Esophagus muscularis mucosa (tissue), 4 donors: ENCODE measurements at regions of chr2 and their contacts with region 1.

Region 1: DNA sequence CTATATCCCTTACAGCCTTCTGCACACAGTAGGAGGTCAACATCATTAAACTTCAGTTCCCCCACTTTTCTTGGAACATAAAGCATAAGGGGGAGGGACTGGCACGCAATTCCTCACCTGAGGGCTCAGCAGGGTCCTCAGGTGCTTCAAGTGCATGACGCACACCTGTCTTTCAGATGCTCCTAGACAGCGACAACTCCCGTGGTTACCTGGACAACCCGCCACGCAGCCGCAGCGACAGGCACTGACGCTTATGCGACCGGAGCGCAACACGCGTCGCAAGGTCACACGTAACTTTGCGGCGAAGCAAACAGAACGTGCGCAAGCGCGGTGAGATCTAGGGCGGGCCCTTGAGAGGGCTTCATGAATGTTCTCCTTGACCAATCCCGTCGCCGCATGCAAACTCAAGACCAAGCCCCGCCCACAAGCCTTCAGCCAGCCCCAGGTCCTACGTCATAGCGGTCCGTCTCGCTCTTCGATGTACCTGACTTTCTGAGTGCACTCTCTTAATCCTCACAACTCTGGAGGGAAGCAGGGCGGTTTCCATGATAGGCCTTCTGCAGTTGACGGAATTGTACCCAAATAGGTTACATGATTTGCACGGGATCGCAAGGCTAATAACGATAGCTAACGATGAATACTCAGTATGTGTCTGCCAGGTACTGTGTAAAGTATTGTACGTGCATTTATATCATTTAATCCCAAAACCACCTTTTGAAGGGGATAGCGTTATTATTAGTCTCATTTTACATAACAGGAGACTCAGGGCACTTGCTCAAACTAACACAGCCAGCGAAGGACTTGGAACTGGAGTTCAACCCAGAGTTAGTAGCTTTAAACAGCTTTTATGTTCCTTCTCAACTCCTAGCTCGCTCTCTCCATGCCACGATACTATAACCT is at the start of gene IFT172:
- DNase-seq: peak; percentile 100
- H3K4me3 ChIP-seq: peak within 1 kb of the TSS; percentile 62 to 70 (median 66)
- H3K27ac ChIP-seq: peak within 1 kb of the TSS; percentile 73 to 82 (median 76)
- H3K4me1 ChIP-seq: peaks cover 10 to 35% (median 29%) of the 10 kb centered on the region in 4 donors
- H3K27me3 ChIP-seq: peaks cover 0 to 1% (median 0%) of the 10 kb centered on the region in 4 donors
- CTCF ChIP-seq: no peak
- EP300 ChIP-seq: no peak
- POLR2A ChIP-seq: peak; percentile 20
- total RNA-seq, gene IFT172: 12.1 to 29.7 (median 25.0) TPM

Region 2: DNA sequence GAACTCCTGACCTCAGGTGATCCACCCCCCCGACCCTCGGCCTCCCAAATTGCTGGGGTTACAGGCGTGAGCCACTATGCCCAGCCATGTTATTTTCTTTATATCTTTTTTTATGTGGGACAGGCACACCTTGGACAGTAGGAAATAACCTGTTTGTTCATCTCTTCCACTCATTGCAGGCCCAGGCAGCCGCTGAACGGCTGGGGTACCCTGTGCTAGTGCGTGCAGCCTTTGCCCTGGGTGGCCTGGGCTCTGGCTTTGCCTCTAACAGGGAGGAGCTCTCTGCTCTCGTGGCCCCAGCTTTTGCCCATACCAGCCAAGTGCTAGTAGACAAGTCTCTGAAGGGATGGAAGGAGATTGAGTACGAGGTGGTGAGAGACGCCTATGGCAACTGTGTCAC is 264.2 kb before region 1 on chr2:
- intact Hi-C with region 1: no loop called
- DNase-seq: no peak
- H3K4me3 ChIP-seq: no peak overlapping the region
- H3K27ac ChIP-seq: no peak overlapping the region
- H3K4me1 ChIP-seq: no peaks in the 10 kb centered on the region
- H3K27me3 ChIP-seq: no peaks in the 10 kb centered on the region
- CTCF ChIP-seq: no peak
- EP300 ChIP-seq: no peak
- POLR2A ChIP-seq: no peak

Region 3: GRCh38 chr2:27409321-27410073 is 80.3 kb before region 1 on chr2 and contains the start of gene PPM1G:
- intact Hi-C with region 1: no loop called
- DNase-seq: peak; percentile 96
- H3K4me3 ChIP-seq: peak within 1 kb of the TSS; percentile 71 to 100 (median 91)
- H3K27ac ChIP-seq: peak within 1 kb of the TSS; percentile 84 to 91 (median 87)
- H3K4me1 ChIP-seq: peaks cover 24 to 35% (median 29%) of the 10 kb centered on the region in 4 donors
- H3K27me3 ChIP-seq: no peaks in the 10 kb centered on the region
- CTCF ChIP-seq: peak in 1 of 3 experiments; percentile 4
- EP300 ChIP-seq: no peak
- POLR2A ChIP-seq: no peak
- total RNA-seq, gene PPM1G: 46.1 to 71.8 (median 62.7) TPM

Region 4: GRCh38 chr2:27428213-27428977 is 61.4 kb before region 1 on chr2 and contains the start of gene NRBP1:
- intact Hi-C with region 1: loop called (anchors 5 kb)
- DNase-seq: peak; percentile 98
- H3K4me3 ChIP-seq: peak within 1 kb of the TSS; percentile 97 to 100 (median 98)
- H3K27ac ChIP-seq: peak within 1 kb of the TSS; percentile 99 to 100 (median 99)
- H3K4me1 ChIP-seq: peaks cover 35 to 51% (median 46%) of the 10 kb centered on the region in 4 donors
- H3K27me3 ChIP-seq: no peaks in the 10 kb centered on the region
- CTCF ChIP-seq: no peak
- EP300 ChIP-seq: no peak
- POLR2A ChIP-seq: peak; percentile 94
- total RNA-seq, gene NRBP1: 74.8 to 96.0 (median 85.8) TPM

Region 5: GRCh38 chr2:27582695-27583389 is 93.1 kb after region 1 on chr2 and contains the start of gene ZNF512:
- intact Hi-C with region 1: loop called (anchors 2 kb)
- DNase-seq: peak; percentile 98
- H3K4me3 ChIP-seq: peak within 1 kb of the TSS; percentile 62 to 72 (median 67)
- H3K27ac ChIP-seq: peak within 1 kb of the TSS; percentile 72 to 83 (median 76)
- H3K4me1 ChIP-seq: peaks cover 17 to 32% (median 29%) of the 10 kb centered on the region in 4 donors
- H3K27me3 ChIP-seq: no peaks in the 10 kb centered on the region
- CTCF ChIP-seq: peak in 1 of 3 experiments; percentile 12
- EP300 ChIP-seq: no peak
- POLR2A ChIP-seq: peak; percentile 19
- total RNA-seq, gene ZNF512: 29.5 to 39.3 (median 33.7) TPM

Region 6: DNA sequence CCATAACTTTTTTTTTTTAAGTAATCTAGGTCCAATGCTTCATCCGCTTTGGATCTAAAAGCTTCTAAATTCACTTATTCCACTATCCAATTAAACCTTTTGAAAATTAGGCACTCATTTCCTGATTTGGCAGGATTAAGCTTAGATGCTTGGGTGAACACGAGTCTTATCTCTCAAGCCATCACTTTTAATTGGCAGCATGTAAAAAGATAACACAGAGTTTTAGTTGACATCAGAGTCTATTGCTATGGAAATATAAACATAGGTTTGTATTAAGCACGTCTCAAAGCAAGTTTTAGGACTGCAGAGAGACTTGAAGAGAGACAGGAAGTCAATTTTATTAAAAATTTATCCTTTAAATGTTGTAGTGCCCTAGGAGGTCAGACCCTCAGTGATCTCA is 394.8 kb after region 1 on chr2:
- intact Hi-C with region 1: no loop called
- DNase-seq: no peak
- H3K4me3 ChIP-seq: no peak overlapping the region
- H3K27ac ChIP-seq: no peak overlapping the region
- H3K4me1 ChIP-seq: peaks cover 12 to 22% (median 19%) of the 10 kb centered on the region in 4 donors
- H3K27me3 ChIP-seq: no peaks in the 10 kb centered on the region
- CTCF ChIP-seq: no peak
- EP300 ChIP-seq: no peak
- POLR2A ChIP-seq: no peak